ENCODE measurements at regions of chr10 and their contacts with region 1.

Region 1: DNA sequence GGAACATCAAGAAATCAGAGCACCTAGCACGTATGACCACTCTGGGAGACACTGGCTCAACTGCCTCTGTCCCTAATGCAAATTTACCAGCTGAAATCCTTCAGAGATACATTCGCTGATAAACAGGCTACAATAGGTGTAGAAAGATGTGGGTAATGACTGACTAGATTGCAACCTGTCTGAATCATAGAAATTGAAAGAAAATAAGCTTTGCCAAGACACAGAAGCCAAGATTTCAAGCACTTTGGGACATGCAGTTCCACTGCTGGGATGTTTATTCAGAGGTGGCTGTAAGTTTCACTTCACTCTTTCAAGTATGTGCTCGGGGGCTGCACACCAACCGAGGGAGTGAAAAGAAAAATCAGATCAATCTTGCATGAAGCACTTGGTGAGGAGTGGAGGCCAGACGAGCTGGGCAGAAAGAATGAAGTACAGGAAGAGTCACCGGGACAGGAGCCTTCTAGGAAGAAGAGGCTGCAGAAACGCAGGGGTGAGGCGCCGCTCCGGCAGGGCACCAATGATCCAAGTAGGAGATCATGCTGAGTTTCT is 276.7 kb downstream of the PARD3 start:
- DNase-seq: no peak
- ATAC-seq: peak in 1 of 8 donors; percentile 46
- H3K4me3 ChIP-seq: peak overlapping the region in 6 of 10 donors; percentile 2 to 27 (median 10)
- H3K27ac ChIP-seq: peak overlapping the region in 1 of 10 donors; percentile 61
- H3K4me1 ChIP-seq: peaks cover 0 to 40% (median 24%) of the 10 kb centered on the region in 9 donors
- H3K27me3 ChIP-seq: no peaks in the 10 kb centered on the region
- CTCF ChIP-seq: no peak

Region 2: DNA sequence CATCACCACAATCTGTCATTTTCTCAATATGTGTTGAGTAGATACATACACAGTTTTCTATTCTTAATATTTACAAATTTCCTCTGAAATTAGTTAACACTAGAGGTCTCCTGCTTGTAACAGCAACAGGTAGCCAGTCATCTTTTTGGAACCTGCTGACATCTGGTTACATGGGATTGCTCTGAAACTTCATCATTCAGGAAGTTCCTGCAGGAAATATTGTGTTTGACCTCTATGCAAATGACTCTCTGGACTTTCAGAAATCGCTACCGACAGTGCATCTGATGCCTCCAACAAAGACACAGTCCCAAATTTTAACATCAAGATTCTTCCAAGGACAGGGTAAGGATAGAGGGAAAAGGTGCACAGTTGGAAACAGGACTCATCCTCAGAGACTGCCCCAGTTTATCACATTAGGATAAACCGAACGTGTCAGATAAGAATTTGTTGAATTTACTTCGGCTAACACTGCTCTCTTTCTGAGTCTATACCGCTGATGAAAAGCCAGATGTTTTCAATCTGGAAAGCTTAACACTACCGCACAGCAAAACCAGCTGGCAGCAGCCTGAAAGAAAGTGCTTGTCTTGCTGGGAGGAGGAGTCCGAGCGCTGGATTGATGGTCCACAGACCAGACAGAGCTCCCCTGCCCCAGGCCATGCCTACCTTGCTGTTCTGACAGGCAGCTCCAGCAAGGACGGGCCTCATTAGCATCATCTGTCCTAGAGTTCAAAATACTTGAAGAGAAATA is 356.6 kb before region 1 on chr10:
- intact Hi-C with region 1: no loop called
- DNase-seq: peak in 1 of 2 donors; percentile 18
- ATAC-seq: peak in 5 of 8 donors; percentile 30 to 59 (median 51)
- H3K4me3 ChIP-seq: no peak overlapping the region
- H3K27ac ChIP-seq: peak overlapping the region in 1 of 10 donors; percentile 40
- H3K4me1 ChIP-seq: peaks cover 0 to 40% (median 20%) of the 10 kb centered on the region in 9 donors
- H3K27me3 ChIP-seq: no peaks in the 10 kb centered on the region
- CTCF ChIP-seq: no peak

Region 3: GRCh38 chr10:34192646-34193045 is 345.7 kb before region 1 on chr10:
- intact Hi-C with region 1: no loop called
- DNase-seq: no peak
- ATAC-seq: no peak
- H3K4me3 ChIP-seq: no peak overlapping the region
- H3K27ac ChIP-seq: no peak overlapping the region
- H3K4me1 ChIP-seq: peaks cover 0 to 16% (median 0%) of the 10 kb centered on the region in 9 donors
- H3K27me3 ChIP-seq: no peaks in the 10 kb centered on the region
- CTCF ChIP-seq: no peak

Region 4: DNA sequence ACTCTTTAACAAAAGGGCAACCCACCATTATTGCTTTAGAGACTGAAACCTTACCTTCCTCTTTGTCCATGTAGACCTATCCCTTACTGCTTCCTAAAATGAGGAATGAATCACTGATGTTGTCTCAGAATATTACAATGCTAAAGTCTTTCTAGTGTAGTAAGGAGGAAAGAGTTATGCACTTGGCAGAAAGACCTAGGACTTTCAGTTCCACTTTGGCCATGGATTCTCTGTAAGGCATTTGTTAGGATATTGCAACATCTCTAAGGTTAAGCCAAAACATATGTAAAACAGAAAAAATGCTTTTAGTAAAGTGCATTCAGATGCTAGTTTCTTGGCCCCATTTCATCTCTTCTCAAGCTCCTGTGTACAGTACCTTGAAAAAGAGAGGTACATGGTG is 45.8 kb after region 1 on chr10:
- intact Hi-C with region 1: loop called in 1 of 10 experiments (anchors 5 kb)
- DNase-seq: no peak
- ATAC-seq: peak in 3 of 8 donors; percentile 38 to 77 (median 57)
- H3K4me3 ChIP-seq: no peak overlapping the region
- H3K27ac ChIP-seq: peak overlapping the region in 1 of 10 donors; percentile 18
- H3K4me1 ChIP-seq: peaks cover 0 to 29% (median 12%) of the 10 kb centered on the region in 9 donors
- H3K27me3 ChIP-seq: no peaks in the 10 kb centered on the region
- CTCF ChIP-seq: no peak

Region 5: GRCh38 chr10:34624323-34625153 is 86.2 kb after region 1 on chr10:
- intact Hi-C with region 1: loop called in 1 of 10 experiments (anchors 5 kb)
- DNase-seq: no peak
- ATAC-seq: no peak
- H3K4me3 ChIP-seq: no peak overlapping the region
- H3K27ac ChIP-seq: no peak overlapping the region
- H3K4me1 ChIP-seq: peaks cover 0 to 30% (median 16%) of the 10 kb centered on the region in 9 donors
- H3K27me3 ChIP-seq: no peaks in the 10 kb centered on the region
- CTCF ChIP-seq: no peak